Heart right ventricle (tissue), 16 donors: ENCODE measurements at regions of chr7 and their contacts with region 1.

Region 1: GRCh38 chr7:105934572-105935185 is 28.4 kb upstream of the CDHR3 start:
- DNase-seq: peak in 1 of 2 donors; percentile 16
- ATAC-seq: peak; percentile 74 to 92 (median 78)
- H3K4me3 ChIP-seq: no peak overlapping the region
- H3K27ac ChIP-seq: no peak overlapping the region
- H3K4me1 ChIP-seq: peaks cover 0 to 19% (median 2%) of the 10 kb centered on the region in 9 donors
- H3K27me3 ChIP-seq: no peaks in the 10 kb centered on the region
- CTCF ChIP-seq: peak in 7 of 9 donors; percentile 29 to 63 (median 43)

Region 2: GRCh38 chr7:105985229-105985628 is 50.5 kb after region 1 on chr7:
- intact Hi-C with region 1: loop called in 1 of 10 experiments (anchors 10 kb)
- DNase-seq: no peak
- ATAC-seq: peak in 1 of 8 donors; percentile 12
- H3K4me3 ChIP-seq: no peak overlapping the region
- H3K27ac ChIP-seq: no peak overlapping the region
- H3K4me1 ChIP-seq: no peaks in the 10 kb centered on the region
- H3K27me3 ChIP-seq: peaks cover 0 to 7% (median 0%) of the 10 kb centered on the region in 7 donors
- CTCF ChIP-seq: no peak

Region 3: GRCh38 chr7:106009403-106010226 is 74.9 kb after region 1 on chr7:
- intact Hi-C with region 1: loop called in 7 of 10 experiments (anchors 1 to 10 kb)
- DNase-seq: peak; percentile 57 to 78
- ATAC-seq: peak; percentile 93 to 98 (median 96)
- H3K4me3 ChIP-seq: peak overlapping the region in 1 of 10 donors; percentile 2
- H3K27ac ChIP-seq: peak overlapping the region in 1 of 10 donors; percentile 6
- H3K4me1 ChIP-seq: peaks cover 0 to 16% (median 5%) of the 10 kb centered on the region in 9 donors
- H3K27me3 ChIP-seq: peaks cover 0 to 3% (median 0%) of the 10 kb centered on the region in 7 donors
- CTCF ChIP-seq: peak; percentile 93 to 98 (median 96)

Region 4: GRCh38 chr7:106041140-106041717 is 106.5 kb after region 1 on chr7:
- intact Hi-C with region 1: loop called in 6 of 10 experiments (anchors 5 to 10 kb)
- DNase-seq: no peak
- ATAC-seq: peak in 2 of 8 donors; percentile 23 to 26
- H3K4me3 ChIP-seq: no peak overlapping the region
- H3K27ac ChIP-seq: no peak overlapping the region
- H3K4me1 ChIP-seq: peaks cover 0 to 21% (median 8%) of the 10 kb centered on the region in 9 donors
- H3K27me3 ChIP-seq: peaks cover 0 to 19% (median 0%) of the 10 kb centered on the region in 7 donors
- CTCF ChIP-seq: peak; percentile 34 to 78 (median 66)